MCF 10A (cell line): ENCODE measurements at regions of chr1 and their contacts with region 1.

Region 1: GRCh38 chr1:219959540-219960203 is 31.3 kb upstream of the SLC30A10 start:
- DNase-seq: no peak
- H3K4me3 Mint-ChIP-seq: no peak overlapping the region
- H3K27ac Mint-ChIP-seq: no peak overlapping the region
- H3K4me1 Mint-ChIP-seq: no peaks in the 10 kb centered on the region
- H3K27me3 Mint-ChIP-seq: peaks cover 18% of the 10 kb centered on the region
- CTCF ChIP-seq: no peak

Region 2: DNA sequence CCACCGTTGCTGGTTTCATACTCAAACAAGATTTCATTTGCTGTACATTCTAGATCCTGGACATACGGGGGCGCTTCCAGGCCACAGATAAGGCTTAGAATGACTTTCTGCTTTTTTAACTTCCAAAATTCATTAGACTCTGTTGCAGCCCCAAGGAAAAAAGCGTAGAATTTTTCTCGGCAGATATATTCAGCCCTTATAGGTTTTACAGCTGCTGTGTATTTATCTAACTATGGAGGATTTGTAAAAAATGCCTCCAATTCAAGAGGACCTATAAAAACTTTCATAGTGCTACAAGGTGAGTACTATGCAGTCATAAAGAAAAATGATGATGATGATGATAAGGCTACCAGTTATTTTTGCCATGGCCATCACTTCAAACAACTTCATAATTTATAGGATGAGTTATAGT is 82.9 kb before region 1 on chr1:
- CTCF ChIA-PET with region 1: no interaction called
- POLR2A ChIA-PET with region 1: no interaction called
- intact Hi-C with region 1: loop called (anchors 5 kb)
- DNase-seq: peak; percentile 68
- H3K4me3 Mint-ChIP-seq: no peak overlapping the region
- H3K27ac Mint-ChIP-seq: no peak overlapping the region
- H3K4me1 Mint-ChIP-seq: no peaks in the 10 kb centered on the region
- H3K27me3 Mint-ChIP-seq: peaks cover 95% of the 10 kb centered on the region
- CTCF ChIP-seq: peak; percentile 40

Region 3: DNA sequence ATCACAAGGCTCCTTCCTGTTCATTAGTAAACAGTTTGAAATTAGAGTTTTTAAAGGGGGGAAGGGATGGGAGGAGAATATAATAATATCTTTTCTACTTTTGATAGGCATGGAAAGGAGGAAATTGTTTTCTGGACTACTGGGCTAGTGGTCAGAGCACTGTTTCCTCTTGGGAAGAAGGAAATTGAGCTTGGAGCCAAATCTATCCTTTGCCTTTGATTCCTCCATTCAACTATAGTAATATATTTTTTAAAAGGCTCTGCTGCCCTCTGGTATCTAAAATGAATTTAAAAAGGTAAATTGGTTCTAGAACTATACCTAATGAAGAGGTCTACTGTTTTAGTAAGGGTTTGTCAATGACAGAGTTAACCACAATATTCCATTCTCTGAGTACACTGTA is 140.2 kb after region 1 on chr1:
- CTCF ChIA-PET with region 1: no interaction called
- POLR2A ChIA-PET with region 1: no interaction called
- intact Hi-C with region 1: no loop called
- DNase-seq: no peak
- H3K4me3 Mint-ChIP-seq: no peak overlapping the region
- H3K27ac Mint-ChIP-seq: no peak overlapping the region
- H3K4me1 Mint-ChIP-seq: peaks cover 18% of the 10 kb centered on the region
- H3K27me3 Mint-ChIP-seq: no peaks in the 10 kb centered on the region
- CTCF ChIP-seq: no peak